ENCODE measurements at regions of chr5 and their contacts with region 1.

Region 1: GRCh38 chr5:151686674-151687407 is at the start of gene SPARC:
- DNase-seq: peak; percentile 79 to 96
- H3K4me3 ChIP-seq: peak within 1 kb of the TSS; percentile 76 to 78
- H3K27ac ChIP-seq: peak within 1 kb of the TSS; percentile 93 to 98
- H3K4me1 ChIP-seq: peaks cover 3 to 27% of the 10 kb centered on the region in 2 donors
- H3K27me3 ChIP-seq: no peaks in the 10 kb centered on the region
- CTCF ChIP-seq: peak in 1 of 3 experiments; percentile 11
- total RNA-seq, gene SPARC: 935 TPM

Region 2: DNA sequence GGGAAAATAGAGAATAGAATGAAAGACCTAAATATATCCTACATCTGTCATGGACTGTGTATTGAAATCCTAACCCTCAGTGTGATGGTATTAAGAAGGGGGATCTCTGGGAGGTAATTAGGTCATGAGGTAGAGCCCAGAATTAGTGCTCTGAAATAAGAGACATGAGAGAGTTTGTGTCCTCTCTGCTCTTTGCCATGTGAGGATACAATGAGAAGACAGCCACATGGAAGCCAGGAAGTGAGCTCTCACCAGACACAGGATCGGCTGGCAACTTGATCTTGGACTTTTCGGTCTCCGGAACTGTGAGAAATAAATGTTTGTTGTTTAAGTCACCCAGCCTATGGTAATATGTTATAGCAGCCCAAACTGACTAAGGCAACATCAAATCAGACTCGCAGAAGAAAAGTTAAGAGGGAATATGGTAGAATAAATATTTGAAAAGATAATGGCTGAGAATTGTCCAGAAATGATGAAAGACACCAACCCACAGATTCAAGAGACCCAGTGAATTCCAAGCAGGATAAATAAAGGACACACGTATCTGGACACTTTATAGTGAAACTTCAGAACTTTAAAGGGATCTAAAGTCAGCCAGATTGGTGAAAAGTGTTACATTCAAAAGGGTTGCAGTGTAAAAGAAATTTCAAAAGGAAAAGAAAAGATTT is 252.1 kb before region 1 on chr5:
- intact Hi-C with region 1: no loop called
- DNase-seq: no peak
- H3K4me3 ChIP-seq: no peak overlapping the region
- H3K27ac ChIP-seq: no peak overlapping the region
- H3K4me1 ChIP-seq: no peaks in the 10 kb centered on the region
- H3K27me3 ChIP-seq: no peaks in the 10 kb centered on the region
- CTCF ChIP-seq: no peak

Region 3: GRCh38 chr5:151659001-151659754 is 27.7 kb before region 1 on chr5:
- intact Hi-C with region 1: loop called (anchors 1 kb)
- DNase-seq: peak; percentile 50 to 87
- H3K4me3 ChIP-seq: no peak overlapping the region
- H3K27ac ChIP-seq: peak overlapping the region; percentile 72 to 93
- H3K4me1 ChIP-seq: peaks cover 5 to 19% of the 10 kb centered on the region in 2 donors
- H3K27me3 ChIP-seq: no peaks in the 10 kb centered on the region
- CTCF ChIP-seq: peak; percentile 87 to 92 (median 90)

Region 4: GRCh38 chr5:151675611-151676313 is 11.1 kb before region 1 on chr5:
- intact Hi-C with region 1: loop called (anchors 2 kb)
- DNase-seq: no peak
- H3K4me3 ChIP-seq: peak overlapping the region in 1 of 2 donors; percentile 25
- H3K27ac ChIP-seq: peak overlapping the region; percentile 93 to 98
- H3K4me1 ChIP-seq: peaks cover 59 to 96% of the 10 kb centered on the region in 2 donors
- H3K27me3 ChIP-seq: no peaks in the 10 kb centered on the region
- CTCF ChIP-seq: no peak

Region 5: GRCh38 chr5:151699071-151699901 is 12.4 kb after region 1 on chr5:
- intact Hi-C with region 1: loop called (anchors 1 kb)
- DNase-seq: peak; percentile 37 to 91
- H3K4me3 ChIP-seq: peak overlapping the region in 1 of 2 donors; percentile 25
- H3K27ac ChIP-seq: peak overlapping the region; percentile 91 to 98
- H3K4me1 ChIP-seq: peaks cover 0 to 44% of the 10 kb centered on the region in 2 donors
- H3K27me3 ChIP-seq: no peaks in the 10 kb centered on the region
- CTCF ChIP-seq: no peak

Region 6: DNA sequence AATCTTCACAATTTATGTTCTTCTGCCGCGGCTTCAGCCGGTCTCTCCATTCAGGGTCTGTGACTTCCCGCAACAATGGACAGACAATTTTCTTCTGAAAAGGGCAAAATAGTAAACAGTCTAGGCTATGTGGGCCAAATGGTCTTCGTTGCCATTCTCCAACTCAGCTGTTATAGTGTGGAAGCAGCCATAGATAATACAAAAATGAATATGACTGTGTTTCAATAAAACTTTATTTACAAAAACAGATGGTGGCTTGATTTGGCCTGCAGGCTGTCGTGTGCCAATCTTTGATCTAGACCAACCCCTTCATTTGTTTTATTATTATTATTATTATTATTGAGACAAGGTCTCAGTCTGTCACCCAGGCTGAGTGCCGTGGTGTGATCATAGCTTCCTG is 43.5 kb after region 1 on chr5:
- intact Hi-C with region 1: no loop called
- DNase-seq: no peak
- H3K4me3 ChIP-seq: no peak overlapping the region
- H3K27ac ChIP-seq: no peak overlapping the region
- H3K4me1 ChIP-seq: no peaks in the 10 kb centered on the region
- H3K27me3 ChIP-seq: no peaks in the 10 kb centered on the region
- CTCF ChIP-seq: no peak

Region 7: DNA sequence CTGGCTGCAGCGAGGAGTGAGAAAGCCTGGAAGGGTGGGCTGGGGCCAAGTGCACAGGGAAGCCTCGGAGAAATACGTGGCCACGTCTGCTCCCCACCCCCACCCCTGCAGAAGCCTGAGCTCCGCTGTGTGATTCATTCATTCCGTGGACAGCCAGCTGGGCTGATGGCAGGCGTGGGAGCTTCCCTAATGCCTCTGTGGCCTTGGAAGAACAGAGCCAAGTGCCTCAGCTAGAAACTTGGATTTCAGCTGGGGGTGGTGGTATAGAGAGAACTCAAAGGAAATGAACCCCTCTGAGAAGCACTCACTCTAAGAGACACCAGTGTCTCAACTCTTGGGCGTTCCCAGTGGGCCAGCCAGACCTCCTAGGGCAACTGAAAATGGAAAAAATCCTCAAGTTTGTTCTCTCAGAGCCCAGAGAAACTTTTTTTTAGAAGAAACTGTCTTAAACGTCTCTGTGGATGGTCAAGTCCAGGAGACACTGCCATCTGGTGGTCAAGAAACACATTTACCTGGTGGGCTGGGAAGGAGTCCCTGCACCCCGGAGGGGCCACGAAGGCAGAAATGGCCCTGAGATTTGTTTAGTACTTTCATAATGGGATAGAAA is 53.6 kb after region 1 on chr5:
- intact Hi-C with region 1: loop called (anchors 1 kb)
- DNase-seq: peak in 1 of 2 donors; percentile 87
- H3K4me3 ChIP-seq: peak overlapping the region in 1 of 2 donors; percentile 9
- H3K27ac ChIP-seq: peak overlapping the region; percentile 86 to 89
- H3K4me1 ChIP-seq: peaks cover 4 to 33% of the 10 kb centered on the region in 2 donors
- H3K27me3 ChIP-seq: no peaks in the 10 kb centered on the region
- CTCF ChIP-seq: peak; percentile 82 to 94 (median 92)

Region 8: GRCh38 chr5:152634586-152634985 is 947.7 kb after region 1 on chr5:
- intact Hi-C with region 1: loop called (anchors 10 kb)
- DNase-seq: peak in 1 of 2 donors; percentile 66
- H3K4me3 ChIP-seq: no peak overlapping the region
- H3K27ac ChIP-seq: peak overlapping the region; percentile 85 to 90
- H3K4me1 ChIP-seq: peaks cover 0 to 61% of the 10 kb centered on the region in 2 donors
- H3K27me3 ChIP-seq: no peaks in the 10 kb centered on the region
- CTCF ChIP-seq: no peak